ENCODE measurements at regions of chr2 and their contacts with region 1.

Region 1: DNA sequence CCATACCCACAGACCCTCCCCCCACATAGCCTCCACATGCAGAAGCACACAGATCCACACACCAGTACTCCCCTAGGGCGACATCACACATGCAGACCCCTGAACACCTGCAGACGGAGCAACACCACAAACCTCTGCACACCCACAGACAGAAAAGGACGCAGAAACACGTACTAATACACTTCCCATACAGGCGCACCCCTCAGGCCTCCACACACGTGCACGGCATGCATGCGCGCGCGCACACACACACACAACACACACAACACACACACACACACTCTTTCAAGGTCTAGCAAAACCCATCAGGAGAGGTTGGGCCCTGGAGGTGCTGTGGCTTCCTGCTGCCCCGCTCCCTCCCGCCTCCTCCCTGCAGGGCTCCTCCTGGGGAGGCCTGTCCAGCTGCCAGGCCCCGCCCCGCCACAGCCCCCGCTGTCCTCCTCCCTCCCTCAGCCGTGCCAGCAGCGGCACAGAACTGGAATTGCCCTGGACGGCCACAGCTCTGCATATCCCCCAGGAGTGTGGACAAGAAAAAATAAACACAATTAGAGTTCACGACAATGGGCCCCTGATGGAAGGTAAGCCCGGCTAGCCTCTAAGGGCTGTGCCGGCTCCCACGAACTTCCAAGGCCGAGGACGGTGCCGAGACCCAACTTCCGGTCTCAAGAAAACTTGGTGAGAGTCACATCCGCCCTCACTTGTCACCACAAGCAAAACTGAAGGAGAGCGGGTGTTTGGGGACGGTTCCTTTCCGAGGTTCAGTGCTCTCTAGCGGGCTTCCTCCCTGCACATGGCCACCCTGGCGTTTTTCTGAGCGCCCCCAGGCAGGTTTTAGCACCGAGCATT is 6.8 kb downstream of the ZFP36L2 start:
- DNase-seq: peak; percentile 54 to 93 (median 87)
- ATAC-seq: peak; percentile 56
- H3K4me3 ChIP-seq: peak overlapping the region; percentile 87
- H3K4me3 Mint-ChIP-seq: peak overlapping the region; percentile 82 to 99 (median 90)
- H3K27ac ChIP-seq: peak overlapping the region; percentile 97
- H3K27ac Mint-ChIP-seq: peak overlapping the region; percentile 90 to 99 (median 97)
- H3K4me1 ChIP-seq: peaks cover 21% of the 10 kb centered on the region in 2 donors
- H3K4me1 Mint-ChIP-seq: peaks cover 34 to 51% (median 44%) of the 10 kb centered on the region in 7 donors
- H3K27me3 ChIP-seq: no peaks in the 10 kb centered on the region
- H3K27me3 Mint-ChIP-seq: peaks cover 0 to 2% (median 0%) of the 10 kb centered on the region in 5 donors

Region 2: DNA sequence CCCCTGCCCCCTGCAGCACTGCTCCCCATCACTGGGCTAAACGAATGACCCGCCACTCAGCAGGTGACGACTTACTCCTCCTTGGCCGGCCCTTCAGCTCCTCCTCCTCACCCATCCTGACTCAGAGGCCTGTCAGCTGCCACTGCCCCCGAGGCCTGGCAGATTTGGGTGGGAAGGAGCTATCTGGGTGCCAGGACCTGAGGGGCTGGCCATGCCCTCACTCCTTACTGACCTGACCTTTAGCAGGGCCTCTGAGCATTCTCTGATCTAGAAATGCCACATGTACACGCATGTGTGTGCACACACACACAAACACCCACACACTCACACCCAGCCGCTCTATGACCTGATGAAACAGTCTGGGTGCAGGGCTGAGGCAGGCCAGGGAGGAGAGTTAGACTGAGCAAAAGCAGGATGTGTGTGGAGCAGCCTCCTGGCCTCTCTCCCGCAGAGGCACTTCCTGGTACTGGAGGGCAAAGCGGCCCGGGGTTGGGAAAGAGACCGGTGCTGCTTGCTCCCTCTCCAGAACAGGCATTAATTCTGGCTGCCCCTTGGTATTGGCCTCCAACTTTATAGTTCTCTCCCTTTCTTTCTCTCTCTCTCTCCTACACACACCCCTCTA is 61.2 kb before region 1 on chr2:
- CTCF ChIA-PET with region 1: interaction called, 4 read pairs
- POLR2A ChIA-PET with region 1: interaction called, 1,899 read pairs
- intact Hi-C with region 1: loop called (anchors 1 kb)
- DNase-seq: peak in 3 of 9 donors; percentile 70 to 72 (median 71)
- ATAC-seq: peak; percentile 59
- H3K4me3 ChIP-seq: peak overlapping the region; percentile 18
- H3K4me3 Mint-ChIP-seq: peak overlapping the region; percentile 81 to 91 (median 86)
- H3K27ac ChIP-seq: peak overlapping the region; percentile 92
- H3K27ac Mint-ChIP-seq: peak overlapping the region; percentile 96 to 100 (median 99)
- H3K4me1 ChIP-seq: peaks cover 53 to 62% of the 10 kb centered on the region in 2 donors
- H3K4me1 Mint-ChIP-seq: peaks cover 47 to 95% (median 69%) of the 10 kb centered on the region in 7 donors
- H3K27me3 ChIP-seq: no peaks in the 10 kb centered on the region
- H3K27me3 Mint-ChIP-seq: no peaks in the 10 kb centered on the region

Region 3: DNA sequence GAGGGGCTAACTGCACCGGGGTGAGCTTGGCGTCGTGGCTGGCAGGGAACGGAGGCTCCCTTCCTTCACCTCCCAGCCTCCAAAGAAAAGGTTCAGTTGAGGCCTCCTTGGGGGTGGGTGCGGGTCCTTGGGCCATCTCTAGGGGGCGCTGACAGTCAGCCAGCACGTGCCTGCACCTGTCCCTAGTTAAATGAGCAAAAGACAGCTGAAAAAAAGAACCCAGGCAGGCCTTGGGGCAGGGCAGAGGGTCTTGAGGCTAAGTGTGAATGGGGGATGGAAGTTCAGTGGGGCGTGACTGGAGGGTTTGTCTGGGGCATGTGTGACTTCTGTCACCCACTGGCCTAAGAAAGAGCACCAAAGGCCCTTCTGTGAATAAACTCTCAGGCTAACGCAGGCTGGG is 49.6 kb before region 1 on chr2:
- CTCF ChIA-PET with region 1: interaction called, 210 read pairs
- POLR2A ChIA-PET with region 1: interaction called, 1,899 read pairs
- intact Hi-C with region 1: loop called (anchors 1 kb)
- DNase-seq: peak in 8 of 9 donors; percentile 51 to 74 (median 64)
- ATAC-seq: peak; percentile 26
- H3K4me3 ChIP-seq: peak overlapping the region; percentile 35
- H3K4me3 Mint-ChIP-seq: peak overlapping the region; percentile 68 to 91 (median 84)
- H3K27ac ChIP-seq: peak overlapping the region; percentile 99
- H3K27ac Mint-ChIP-seq: peak overlapping the region; percentile 94 to 100 (median 98)
- H3K4me1 ChIP-seq: peaks cover 64 to 70% of the 10 kb centered on the region in 2 donors
- H3K4me1 Mint-ChIP-seq: peaks cover 52 to 89% (median 76%) of the 10 kb centered on the region in 7 donors
- H3K27me3 ChIP-seq: no peaks in the 10 kb centered on the region
- H3K27me3 Mint-ChIP-seq: no peaks in the 10 kb centered on the region

Region 4: DNA sequence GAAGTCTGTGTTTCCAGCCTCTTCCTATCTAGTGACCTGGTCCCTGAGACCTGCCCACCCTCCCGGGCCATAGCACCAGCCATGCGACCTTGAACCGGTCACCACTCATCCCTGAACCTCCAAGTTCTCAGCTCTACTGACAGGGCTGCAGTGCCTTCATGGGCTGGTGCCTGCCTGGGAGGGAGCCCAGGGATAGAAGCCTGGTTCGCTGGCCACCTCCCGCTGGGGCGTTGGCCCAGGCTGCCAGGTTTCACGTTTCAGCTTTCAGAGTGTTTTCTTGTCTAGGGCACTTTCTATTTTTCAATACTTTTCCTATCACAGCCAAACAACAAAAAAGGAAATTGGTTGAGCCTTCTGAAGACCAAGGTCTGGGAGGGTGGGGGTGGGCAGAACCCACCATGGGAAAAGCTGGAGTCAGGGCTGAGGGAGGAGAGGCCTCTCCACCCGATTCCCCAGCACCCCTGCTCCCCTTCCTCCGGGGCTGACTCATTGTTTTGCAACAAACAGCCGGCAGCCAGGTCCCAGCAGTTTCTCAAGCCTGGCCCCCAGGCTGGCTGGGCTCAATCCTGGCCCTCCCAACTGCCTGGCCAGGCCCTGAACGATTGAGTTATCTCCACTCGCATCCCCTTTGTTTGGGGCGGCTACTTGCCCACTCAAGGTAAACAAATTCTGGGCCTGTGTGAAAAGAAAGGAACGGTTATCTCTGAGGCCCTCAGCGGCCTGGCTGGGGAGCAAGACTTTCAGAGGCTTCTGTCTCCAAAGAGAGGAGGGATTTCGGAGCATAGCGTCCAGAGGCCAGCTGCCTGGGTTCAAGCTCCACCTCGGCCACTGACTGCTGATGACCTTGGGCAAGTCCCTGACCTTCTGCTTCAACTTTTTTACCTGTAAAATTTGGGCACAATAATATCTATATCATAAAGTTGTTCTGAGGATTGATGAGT is 40.7 kb before region 1 on chr2:
- CTCF ChIA-PET with region 1: interaction called, 210 read pairs
- POLR2A ChIA-PET with region 1: interaction called, 1,899 read pairs
- intact Hi-C with region 1: loop called (anchors 1 kb)
- DNase-seq: peak in 1 of 9 donors; percentile 30
- ATAC-seq: no peak
- H3K4me3 ChIP-seq: peak overlapping the region; percentile 17
- H3K4me3 Mint-ChIP-seq: peak overlapping the region; percentile 53 to 79 (median 71)
- H3K27ac ChIP-seq: peak overlapping the region; percentile 66
- H3K27ac Mint-ChIP-seq: peak overlapping the region; percentile 94 to 99 (median 97)
- H3K4me1 ChIP-seq: peaks cover 49 to 70% of the 10 kb centered on the region in 2 donors
- H3K4me1 Mint-ChIP-seq: peaks cover 52 to 78% (median 75%) of the 10 kb centered on the region in 7 donors
- H3K27me3 ChIP-seq: no peaks in the 10 kb centered on the region
- H3K27me3 Mint-ChIP-seq: no peaks in the 10 kb centered on the region

Region 5: GRCh38 chr2:43194121-43194869 is 25.3 kb before region 1 on chr2:
- CTCF ChIA-PET with region 1: interaction called, 24 read pairs
- POLR2A ChIA-PET with region 1: interaction called, 543 read pairs
- intact Hi-C with region 1: loop called (anchors 1 kb)
- DNase-seq: no peak
- ATAC-seq: no peak
- H3K4me3 ChIP-seq: peak overlapping the region; percentile 80
- H3K4me3 Mint-ChIP-seq: peak overlapping the region; percentile 86 to 100 (median 92)
- H3K27ac ChIP-seq: peak overlapping the region; percentile 98
- H3K27ac Mint-ChIP-seq: peak overlapping the region; percentile 94 to 100 (median 99)
- H3K4me1 ChIP-seq: peaks cover 61 to 69% of the 10 kb centered on the region in 2 donors
- H3K4me1 Mint-ChIP-seq: peaks cover 37 to 75% (median 59%) of the 10 kb centered on the region in 7 donors
- H3K27me3 ChIP-seq: no peaks in the 10 kb centered on the region
- H3K27me3 Mint-ChIP-seq: no peaks in the 10 kb centered on the region

Region 6: GRCh38 chr2:43199492-43200481 is 19.8 kb before region 1 on chr2:
- CTCF ChIA-PET with region 1: interaction called, 24 read pairs
- POLR2A ChIA-PET with region 1: interaction called, 543 read pairs
- intact Hi-C with region 1: loop called (anchors 1 kb)
- DNase-seq: no peak
- ATAC-seq: no peak
- H3K4me3 ChIP-seq: no peak overlapping the region
- H3K4me3 Mint-ChIP-seq: no peak overlapping the region
- H3K27ac ChIP-seq: no peak overlapping the region
- H3K27ac Mint-ChIP-seq: peak overlapping the region in 4 of 9 donors; percentile 22 to 67 (median 53)
- H3K4me1 ChIP-seq: peaks cover 25 to 37% of the 10 kb centered on the region in 2 donors
- H3K4me1 Mint-ChIP-seq: peaks cover 27 to 71% (median 54%) of the 10 kb centered on the region in 7 donors
- H3K27me3 ChIP-seq: no peaks in the 10 kb centered on the region
- H3K27me3 Mint-ChIP-seq: no peaks in the 10 kb centered on the region